HCT116 (cell line): ENCODE measurements at regions of chr3 and their contacts with region 1.

Region 1: GRCh38 chr3:196195664-196196265 is 15.4 kb downstream of the ZDHHC19 start:
- DNase-seq: no peak
- ATAC-seq: no peak
- H3K4me3 ChIP-seq: no peak overlapping the region
- H3K27ac ChIP-seq: no peak overlapping the region
- H3K4me1 ChIP-seq: no peaks in the 10 kb centered on the region; a peak in 1 of 4 replicates
- H3K27me3 ChIP-seq: no peaks in the 10 kb centered on the region
- CTCF ChIP-seq: no peak
- POLR2A ChIP-seq: no peak
- RAD21 ChIP-seq: no peak

Region 2: DNA sequence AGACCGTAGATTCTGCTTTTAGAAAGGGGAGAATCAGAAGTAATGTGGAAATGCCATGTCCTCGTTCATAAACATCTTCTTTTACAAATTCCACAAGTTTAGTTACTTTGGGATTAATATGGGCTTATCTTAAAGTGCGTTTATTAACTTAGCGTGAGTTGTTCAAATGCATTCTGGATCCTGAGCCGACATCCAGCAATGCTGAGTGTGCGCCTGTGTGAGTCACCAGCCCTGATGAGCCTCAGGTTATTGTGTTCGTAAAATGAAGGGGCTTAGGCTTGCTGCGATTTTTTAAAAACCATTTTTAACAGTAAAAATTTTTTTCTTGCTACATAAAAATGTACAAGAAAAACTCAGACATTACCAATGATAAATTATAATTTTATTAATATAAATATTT is 171.8 kb before region 1 on chr3:
- CTCF ChIA-PET with region 1: interaction called, 10 read pairs
- POLR2A ChIA-PET with region 1: no interaction called
- RAD21 ChIA-PET with region 1: interaction called in 1 of 2 experiments, 4 read pairs
- intact Hi-C with region 1: loop called (anchors 1 kb)
- DNase-seq: no peak
- ATAC-seq: no peak
- H3K4me3 ChIP-seq: no peak overlapping the region
- H3K27ac ChIP-seq: no peak overlapping the region
- H3K4me1 ChIP-seq: no peaks in the 10 kb centered on the region
- H3K27me3 ChIP-seq: no peaks in the 10 kb centered on the region
- CTCF ChIP-seq: no peak
- POLR2A ChIP-seq: no peak
- RAD21 ChIP-seq: no peak

Region 3: GRCh38 chr3:196063049-196063448 is 132.7 kb before region 1 on chr3:
- CTCF ChIA-PET with region 1: no interaction called
- POLR2A ChIA-PET with region 1: no interaction called
- RAD21 ChIA-PET with region 1: no interaction called
- intact Hi-C with region 1: no loop called
- DNase-seq: no peak
- ATAC-seq: no peak
- H3K4me3 ChIP-seq: no peak overlapping the region
- H3K27ac ChIP-seq: no peak overlapping the region
- H3K4me1 ChIP-seq: no peaks in the 10 kb centered on the region
- H3K27me3 ChIP-seq: no peaks in the 10 kb centered on the region
- CTCF ChIP-seq: no peak
- POLR2A ChIP-seq: no peak
- RAD21 ChIP-seq: no peak

Region 4: GRCh38 chr3:196073188-196073838 is 122.5 kb before region 1 on chr3:
- CTCF ChIA-PET with region 1: interaction called, 17 read pairs
- POLR2A ChIA-PET with region 1: no interaction called
- RAD21 ChIA-PET with region 1: interaction called in 1 of 2 experiments, 3 read pairs
- intact Hi-C with region 1: loop called (anchors 1 kb)
- DNase-seq: peak; percentile 35
- ATAC-seq: peak; percentile 96
- H3K4me3 ChIP-seq: no peak overlapping the region
- H3K27ac ChIP-seq: no peak overlapping the region
- H3K4me1 ChIP-seq: no peaks in the 10 kb centered on the region
- H3K27me3 ChIP-seq: no peaks in the 10 kb centered on the region
- CTCF ChIP-seq: peak; percentile 56 to 80 (median 76); a peak in 5 of 6 replicates
- POLR2A ChIP-seq: no peak
- RAD21 ChIP-seq: peak; percentile 82